ENCODE measurements at regions of chr16 and their contacts with region 1.

Region 1: GRCh38 chr16:24253192-24253591 is 2.9 kb upstream of the CACNG3 start:
- DNase-seq: peak; percentile 27
- H3K4me3 Mint-ChIP-seq: no peak overlapping the region
- H3K27ac Mint-ChIP-seq: no peak overlapping the region
- H3K4me1 Mint-ChIP-seq: no peaks in the 10 kb centered on the region
- H3K27me3 Mint-ChIP-seq: peaks cover 81% of the 10 kb centered on the region
- CTCF ChIP-seq: peak; percentile 82

Region 2: GRCh38 chr16:23391381-23392222 is 861.6 kb before region 1 on chr16:
- CTCF ChIA-PET with region 1: no interaction called
- intact Hi-C with region 1: no loop called
- DNase-seq: no peak
- H3K4me3 Mint-ChIP-seq: no peak overlapping the region
- H3K27ac Mint-ChIP-seq: no peak overlapping the region
- H3K4me1 Mint-ChIP-seq: no peaks in the 10 kb centered on the region
- H3K27me3 Mint-ChIP-seq: no peaks in the 10 kb centered on the region
- CTCF ChIP-seq: no peak

Region 3: GRCh38 chr16:24041826-24042631 is 211.2 kb before region 1 on chr16:
- CTCF ChIA-PET with region 1: interaction called, 5 read pairs
- intact Hi-C with region 1: loop called (anchors 1 kb)
- DNase-seq: peak; percentile 83
- H3K4me3 Mint-ChIP-seq: no peak overlapping the region
- H3K27ac Mint-ChIP-seq: no peak overlapping the region
- H3K4me1 Mint-ChIP-seq: no peaks in the 10 kb centered on the region
- H3K27me3 Mint-ChIP-seq: peaks cover 60% of the 10 kb centered on the region
- CTCF ChIP-seq: peak; percentile 79

Region 4: DNA sequence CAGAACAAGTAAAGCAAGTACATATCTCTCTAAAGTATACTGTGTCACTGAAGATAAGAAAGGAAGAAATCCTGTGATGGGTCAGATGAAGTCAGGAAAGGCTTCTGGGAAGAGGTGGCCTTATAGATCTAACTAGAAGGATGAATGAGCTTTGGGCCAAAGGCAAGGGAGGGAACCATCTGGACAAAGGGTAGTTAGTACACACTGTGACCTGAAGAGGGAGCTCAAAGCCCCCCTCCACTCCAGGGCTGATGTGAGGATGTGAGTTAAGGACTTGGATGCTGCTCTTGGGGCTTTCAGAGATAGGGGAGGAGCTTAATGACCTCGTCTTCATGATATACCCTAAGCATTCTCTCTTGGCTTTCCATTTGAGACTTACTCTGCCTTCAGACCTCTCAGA is 182.3 kb before region 1 on chr16:
- CTCF ChIA-PET with region 1: interaction called, 22 read pairs
- intact Hi-C with region 1: loop called (anchors 2 kb)
- DNase-seq: peak; percentile 44
- H3K4me3 Mint-ChIP-seq: no peak overlapping the region
- H3K27ac Mint-ChIP-seq: no peak overlapping the region
- H3K4me1 Mint-ChIP-seq: no peaks in the 10 kb centered on the region
- H3K27me3 Mint-ChIP-seq: peaks cover 65% of the 10 kb centered on the region
- CTCF ChIP-seq: peak; percentile 47

Region 5: DNA sequence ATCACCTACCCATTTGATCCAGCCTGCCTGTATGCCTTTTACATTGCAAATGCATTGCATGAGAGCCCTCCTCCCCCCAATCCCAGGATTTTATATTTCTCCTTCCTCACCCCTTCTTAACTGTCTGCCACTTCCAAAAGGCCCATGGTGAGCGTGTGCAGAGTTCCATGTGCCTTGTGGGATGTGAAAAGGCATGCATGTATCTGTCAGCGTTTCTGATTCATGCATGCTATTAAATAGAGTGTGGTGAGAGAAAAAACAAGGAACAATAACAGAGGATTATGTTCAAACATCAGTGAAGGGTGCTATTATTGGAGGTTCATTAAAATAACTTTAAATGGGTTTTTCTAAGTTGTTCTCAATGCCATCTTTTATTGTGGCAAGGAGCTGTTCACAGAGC is 58.0 kb before region 1 on chr16:
- CTCF ChIA-PET with region 1: no interaction called
- intact Hi-C with region 1: no loop called
- DNase-seq: no peak
- H3K4me3 Mint-ChIP-seq: no peak overlapping the region
- H3K27ac Mint-ChIP-seq: no peak overlapping the region
- H3K4me1 Mint-ChIP-seq: no peaks in the 10 kb centered on the region
- H3K27me3 Mint-ChIP-seq: peaks cover 73% of the 10 kb centered on the region
- CTCF ChIP-seq: no peak

Measured in Calu3 (cell line).